KBM-7 (cell line): ENCODE measurements at regions of chr2 and their contacts with region 1.

Region 1: DNA sequence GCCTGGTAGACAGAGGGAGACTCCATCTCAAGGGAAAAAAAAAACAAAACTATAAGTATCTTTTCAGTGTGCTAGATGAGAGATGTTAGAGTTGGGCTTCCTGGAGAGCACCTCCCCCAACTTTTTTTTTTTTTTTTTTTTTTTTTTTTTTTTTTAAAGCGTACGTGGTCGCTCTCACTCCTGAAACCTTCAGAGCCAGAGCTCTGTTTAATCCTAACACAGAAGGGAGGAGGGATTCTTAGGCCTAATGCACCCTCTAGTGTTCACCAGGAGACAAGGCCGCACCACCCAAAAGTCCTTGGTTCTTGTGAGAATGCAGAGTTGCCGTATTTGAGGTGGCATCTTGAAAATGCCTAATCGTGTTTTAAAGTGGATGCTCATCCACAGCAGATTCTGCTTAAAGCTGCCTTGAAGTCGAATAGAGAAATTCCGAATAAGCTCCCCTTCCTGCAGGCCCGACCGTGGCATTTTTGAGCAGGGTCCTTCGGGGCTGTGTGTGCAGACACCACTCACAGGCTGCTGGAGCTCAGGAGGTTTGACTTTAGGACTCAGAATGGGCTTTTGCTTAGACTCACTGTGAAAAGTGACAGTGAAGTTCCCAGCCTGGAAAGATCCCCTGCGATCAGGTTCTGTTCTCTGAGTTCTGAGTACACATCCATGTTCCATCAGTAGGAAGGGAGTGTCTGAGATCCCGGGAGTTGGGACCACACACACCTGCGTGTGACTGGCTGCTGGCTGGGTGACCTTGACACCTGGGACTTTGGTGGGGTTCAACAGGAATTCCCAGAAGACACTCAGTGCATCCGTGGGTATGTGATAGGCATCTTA is 252.6 kb downstream of the AGAP1 start:
- DNase-seq: peak; percentile 78

Region 2: GRCh38 chr2:235135990-235136561 is 610.4 kb before region 1 on chr2:
- in situ Hi-C with region 1: loop called (anchors 25 kb)
- DNase-seq: peak; percentile 68

Region 3: DNA sequence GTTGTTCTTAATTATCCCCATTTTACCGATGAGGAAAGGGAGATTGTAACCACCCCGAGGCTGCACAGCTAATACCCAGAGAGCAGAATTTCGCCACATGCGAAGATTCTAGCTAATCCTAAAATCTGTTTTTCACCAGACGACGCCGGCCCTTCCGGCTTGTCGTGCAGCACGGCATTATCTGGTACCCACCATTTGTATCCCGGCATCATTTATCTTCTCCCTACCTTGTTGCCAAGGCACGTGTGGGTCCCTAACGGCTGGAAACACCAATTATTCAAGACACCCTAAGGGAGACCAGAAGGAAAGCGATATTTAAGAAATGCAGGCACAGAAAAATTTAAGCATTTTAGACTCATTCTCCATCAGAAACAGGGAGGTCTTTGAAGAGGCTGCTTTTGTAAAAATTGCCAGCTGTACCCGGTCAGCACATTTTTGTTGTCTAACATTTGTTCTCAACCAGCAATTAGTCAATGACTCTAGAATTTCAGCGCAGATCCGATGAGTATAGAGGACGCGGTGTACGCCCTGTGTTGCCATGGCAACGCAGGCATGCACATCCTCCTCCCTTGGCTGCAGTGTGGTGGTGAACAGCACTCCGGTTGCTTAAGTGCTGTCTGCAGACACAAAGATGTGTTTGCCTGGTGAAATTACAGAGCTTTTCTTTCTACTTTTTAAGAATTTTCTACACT is 141.0 kb before region 1 on chr2:
- in situ Hi-C with region 1: loop called (anchors 25 kb)
- DNase-seq: no peak

Region 4: GRCh38 chr2:235868224-235868623 is 121.8 kb after region 1 on chr2:
- in situ Hi-C with region 1: no loop called
- DNase-seq: no peak

Region 5: GRCh38 chr2:236309669-236310029 is 563.2 kb after region 1 on chr2:
- in situ Hi-C with region 1: no loop called
- DNase-seq: no peak